PC-9 (cell line): ENCODE measurements at regions of chr7 and their contacts with region 1.

Region 1: DNA sequence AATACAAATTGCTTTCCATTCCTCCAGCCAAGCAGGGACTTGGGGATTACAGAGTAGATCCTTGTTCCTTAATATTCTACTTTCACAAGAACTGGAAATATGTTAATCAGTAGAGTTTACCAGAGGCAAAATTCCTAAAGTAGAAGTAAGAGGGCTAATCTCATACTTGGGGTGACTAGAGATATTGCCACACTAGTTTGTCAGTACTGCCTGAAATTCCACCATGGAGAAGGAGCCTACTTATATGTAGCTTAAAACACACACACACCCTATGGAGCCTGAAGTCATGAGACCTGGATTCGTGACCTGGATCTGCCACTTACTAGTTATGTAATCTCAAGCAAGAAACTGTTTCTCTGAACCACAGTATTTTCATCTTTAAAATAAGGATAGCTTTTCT is 33.9 kb downstream of the STRIP2 start:
- DNase-seq: peak in 1 of 2 experiments; percentile 92
- H3K4me3 ChIP-seq: no peak overlapping the region
- H3K27ac ChIP-seq: peak overlapping the region; percentile 80
- H3K4me1 ChIP-seq: peaks cover 45% of the 10 kb centered on the region
- H3K27me3 ChIP-seq: no peaks in the 10 kb centered on the region
- CTCF ChIP-seq: no peak

Region 2: GRCh38 chr7:128739048-128739962 is 728.8 kb before region 1 on chr7 and contains the start of gene CALU:
- CTCF ChIA-PET with region 1: interaction called, 15 read pairs
- POLR2A ChIA-PET with region 1: no interaction called
- intact Hi-C with region 1: no loop called
- DNase-seq: peak; percentile 90 to 97
- H3K4me3 ChIP-seq: peak within 1 kb of the TSS; percentile 83
- H3K27ac ChIP-seq: peak within 1 kb of the TSS; percentile 81
- H3K4me1 ChIP-seq: peaks cover 41% of the 10 kb centered on the region
- H3K27me3 ChIP-seq: no peaks in the 10 kb centered on the region
- CTCF ChIP-seq: no peak
- total RNA-seq, gene CALU: 109 and 152 TPM in 2 replicates

Region 3: GRCh38 chr7:129343099-129343700 is 124.9 kb before region 1 on chr7:
- CTCF ChIA-PET with region 1: interaction called, 4 read pairs
- POLR2A ChIA-PET with region 1: no interaction called
- intact Hi-C with region 1: loop called (anchors 1 kb)
- DNase-seq: peak; percentile 9 to 52
- H3K4me3 ChIP-seq: no peak overlapping the region
- H3K27ac ChIP-seq: no peak overlapping the region
- H3K4me1 ChIP-seq: peaks cover 8% of the 10 kb centered on the region
- H3K27me3 ChIP-seq: no peaks in the 10 kb centered on the region
- CTCF ChIP-seq: peak; percentile 85

Region 4: GRCh38 chr7:129494041-129494440 is 26.0 kb after region 1 on chr7:
- CTCF ChIA-PET with region 1: no interaction called
- POLR2A ChIA-PET with region 1: no interaction called
- intact Hi-C with region 1: no loop called
- DNase-seq: no peak
- H3K4me3 ChIP-seq: no peak overlapping the region
- H3K27ac ChIP-seq: no peak overlapping the region
- H3K4me1 ChIP-seq: no peaks in the 10 kb centered on the region
- H3K27me3 ChIP-seq: no peaks in the 10 kb centered on the region
- CTCF ChIP-seq: no peak

Region 5: DNA sequence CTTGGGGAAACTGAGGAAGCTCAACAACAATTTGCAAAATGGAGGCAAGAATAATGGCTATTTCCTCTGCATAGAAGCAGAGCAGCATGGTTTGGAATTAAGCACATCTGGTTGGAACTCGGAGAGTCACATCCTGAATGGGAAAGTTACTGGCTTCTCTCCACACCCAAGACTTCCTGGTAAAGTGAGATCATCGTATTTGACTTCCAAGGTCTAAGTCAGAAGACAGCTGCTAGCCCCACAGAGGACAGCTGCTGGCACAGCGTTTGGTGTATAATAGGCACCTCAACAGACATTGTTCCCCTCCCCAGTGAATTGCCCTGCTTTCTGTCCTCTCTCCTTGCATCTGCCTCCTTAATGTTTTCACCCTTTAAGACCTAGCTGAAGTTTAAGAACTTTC is 106.4 kb after region 1 on chr7:
- CTCF ChIA-PET with region 1: interaction called, 17 read pairs
- POLR2A ChIA-PET with region 1: no interaction called
- intact Hi-C with region 1: no loop called
- DNase-seq: no peak
- H3K4me3 ChIP-seq: no peak overlapping the region
- H3K27ac ChIP-seq: no peak overlapping the region
- H3K4me1 ChIP-seq: peaks cover 8% of the 10 kb centered on the region
- H3K27me3 ChIP-seq: no peaks in the 10 kb centered on the region
- CTCF ChIP-seq: no peak

Region 6: DNA sequence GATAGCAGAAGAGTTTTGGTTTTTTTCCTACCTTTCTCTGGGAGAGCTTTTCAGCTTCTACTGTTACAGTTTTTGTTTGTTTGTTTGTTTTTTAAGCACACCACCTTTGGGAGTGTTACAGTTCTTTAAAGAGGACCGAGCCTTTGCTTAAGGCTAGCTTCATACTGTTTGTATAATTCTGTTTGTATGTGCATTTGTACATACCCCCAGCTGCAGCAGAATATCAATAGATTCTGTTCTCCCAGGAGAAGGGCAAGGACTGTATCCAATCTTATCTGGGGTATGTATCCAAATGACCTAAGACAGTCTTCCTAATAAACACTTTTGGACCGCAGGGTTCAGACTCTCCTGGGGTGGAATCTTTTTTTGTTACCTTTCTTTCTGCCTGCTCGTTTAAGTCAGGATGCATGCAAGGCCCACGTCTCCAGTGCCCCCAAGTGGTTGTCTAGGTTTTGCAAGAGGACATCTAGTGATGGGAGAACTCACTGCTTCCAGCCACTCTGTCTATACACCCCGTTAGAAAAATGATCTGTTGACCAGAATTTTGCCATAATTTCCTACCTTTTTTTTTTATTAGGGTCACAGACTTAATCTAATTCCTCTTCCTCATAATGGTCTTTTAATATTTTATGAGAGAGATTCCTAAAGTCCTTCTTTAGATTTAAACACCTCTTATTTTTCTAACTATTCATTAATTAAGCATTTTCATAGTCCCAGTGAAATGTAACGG is 167.4 kb after region 1 on chr7:
- CTCF ChIA-PET with region 1: interaction called, 4 read pairs
- POLR2A ChIA-PET with region 1: no interaction called
- intact Hi-C with region 1: loop called (anchors 1 kb)
- DNase-seq: peak; percentile 46 to 62
- H3K4me3 ChIP-seq: no peak overlapping the region
- H3K27ac ChIP-seq: 0 out of 2 replicates have a peak overlapping the region, but pooled peaks have one; percentile 4
- H3K4me1 ChIP-seq: no peaks in the 10 kb centered on the region
- H3K27me3 ChIP-seq: no peaks in the 10 kb centered on the region
- CTCF ChIP-seq: peak; percentile 81

Region 7: DNA sequence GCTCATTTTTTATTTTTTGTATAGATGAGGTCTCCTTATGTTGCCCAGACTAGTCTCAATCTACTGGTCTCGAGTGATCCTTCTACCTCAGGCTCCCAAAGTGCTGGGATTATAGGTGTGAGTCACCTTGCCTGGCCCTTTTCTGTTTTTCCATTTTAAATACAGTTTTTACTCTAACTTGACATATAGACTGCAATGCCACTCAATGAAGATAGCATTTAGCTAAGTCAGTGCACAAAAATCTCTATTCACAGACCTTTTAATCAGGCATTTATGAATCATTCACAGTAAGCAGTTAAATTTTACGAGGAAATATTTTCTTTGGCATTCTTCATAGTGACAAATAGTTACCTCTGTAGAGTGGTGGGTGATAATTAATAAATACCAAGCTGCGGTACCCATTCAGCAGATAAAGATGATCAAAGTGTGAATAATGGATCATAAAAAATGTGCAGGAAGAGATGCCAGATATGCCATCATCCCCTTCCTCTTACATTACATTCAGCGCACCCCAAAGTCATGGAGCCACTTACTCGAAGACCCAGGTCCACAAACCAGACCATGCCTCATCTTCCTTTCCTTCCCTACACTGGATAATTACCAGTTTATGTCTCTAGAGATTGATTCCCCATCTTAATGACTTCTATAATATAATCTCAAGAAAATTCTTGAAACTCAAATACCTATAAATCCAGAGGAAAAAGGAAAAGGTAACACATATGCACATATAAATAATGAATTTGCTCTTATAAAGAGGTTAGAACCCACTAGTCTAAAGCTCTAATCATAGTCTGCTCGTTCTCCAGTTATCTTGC is 428.7 kb after region 1 on chr7:
- CTCF ChIA-PET with region 1: no interaction called
- POLR2A ChIA-PET with region 1: no interaction called
- intact Hi-C with region 1: no loop called
- DNase-seq: peak in 1 of 2 experiments; percentile 74
- H3K4me3 ChIP-seq: no peak overlapping the region
- H3K27ac ChIP-seq: peak overlapping the region; percentile 25; the same call in 1 of the 2 replicates
- H3K4me1 ChIP-seq: 0 out of 2 replicates have a peak, but pooled peaks cover 6% of the 10 kb centered on the region
- H3K27me3 ChIP-seq: no peaks in the 10 kb centered on the region
- CTCF ChIP-seq: no peak